Common myeloid progenitor, CD34-positive (primary cell): ENCODE measurements at regions of chr9 and their contacts with region 1.

Region 1: GRCh38 chr9:126902210-126902609 is 12.4 kb upstream of the RALGPS1 start:
- DNase-seq: no peak
- H3K4me3 ChIP-seq: no peak overlapping the region
- H3K27ac ChIP-seq: no peak overlapping the region
- H3K4me1 ChIP-seq: no peaks in the 10 kb centered on the region
- H3K27me3 ChIP-seq: no peaks in the 10 kb centered on the region

Region 2: GRCh38 chr9:126650404-126651341 is 251.5 kb before region 1 on chr9:
- CTCF ChIA-PET with region 1: no interaction called
- POLR2A ChIA-PET with region 1: no interaction called
- DNase-seq: no peak
- H3K4me3 ChIP-seq: no peak overlapping the region
- H3K27ac ChIP-seq: no peak overlapping the region
- H3K4me1 ChIP-seq: no peaks in the 10 kb centered on the region
- H3K27me3 ChIP-seq: peaks cover 0 to 98% (median 30%) of the 10 kb centered on the region in 5 experiments

Region 3: DNA sequence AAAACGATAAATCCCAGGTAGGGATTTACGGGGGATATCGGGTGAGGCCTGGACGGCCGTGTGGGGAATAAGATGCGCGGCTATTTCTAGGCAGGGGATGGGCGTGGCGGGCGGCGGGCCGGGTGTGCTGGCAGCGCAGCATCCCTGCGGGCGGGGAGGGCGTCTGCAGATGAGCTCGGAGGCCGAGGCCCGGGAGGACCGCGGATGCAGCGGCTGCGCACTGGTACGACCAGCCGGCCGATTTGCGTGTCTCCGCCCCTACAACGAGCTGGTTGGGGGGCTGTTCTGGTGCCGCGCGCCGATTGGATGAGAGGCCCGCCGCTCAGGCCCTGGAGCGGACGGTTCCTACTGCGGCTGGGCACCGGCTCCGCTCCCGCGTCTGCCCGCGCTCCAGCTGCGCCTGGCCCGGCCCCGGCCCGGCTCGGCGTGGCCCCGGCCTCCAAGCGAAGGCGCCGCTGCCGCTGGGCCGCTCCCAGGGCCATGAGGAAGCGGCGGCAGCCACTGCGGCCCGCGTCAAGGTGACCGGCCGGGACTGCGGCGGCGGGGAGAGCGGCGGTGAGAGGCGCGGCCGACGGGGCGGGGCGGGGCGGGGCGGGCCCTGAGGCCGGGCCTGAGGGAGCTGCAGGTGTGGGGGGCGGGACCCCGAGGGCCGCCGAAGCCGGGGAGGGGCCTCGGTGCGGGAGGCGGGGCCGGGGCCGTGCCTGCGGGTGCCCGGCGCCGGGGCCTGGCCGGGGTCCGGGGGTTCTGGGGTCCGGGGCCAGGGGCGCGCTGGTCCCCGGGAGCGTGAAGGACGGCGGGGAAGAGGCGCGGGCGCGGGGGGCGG is 12.5 kb after region 1 on chr9 and contains the start of gene RALGPS1:
- CTCF ChIA-PET with region 1: interaction called, 10 read pairs
- POLR2A ChIA-PET with region 1: no interaction called
- DNase-seq: peak; percentile 95 to 96 (median 95)
- H3K4me3 ChIP-seq: peak within 1 kb of the TSS; percentile 40 to 77 (median 51)
- H3K27ac ChIP-seq: no peak within 1 kb of the TSS
- H3K4me1 ChIP-seq: peaks cover 0 to 9% (median 6%) of the 10 kb centered on the region in 4 experiments
- H3K27me3 ChIP-seq: peaks cover 0 to 16% (median 9%) of the 10 kb centered on the region in 5 experiments

Region 4: DNA sequence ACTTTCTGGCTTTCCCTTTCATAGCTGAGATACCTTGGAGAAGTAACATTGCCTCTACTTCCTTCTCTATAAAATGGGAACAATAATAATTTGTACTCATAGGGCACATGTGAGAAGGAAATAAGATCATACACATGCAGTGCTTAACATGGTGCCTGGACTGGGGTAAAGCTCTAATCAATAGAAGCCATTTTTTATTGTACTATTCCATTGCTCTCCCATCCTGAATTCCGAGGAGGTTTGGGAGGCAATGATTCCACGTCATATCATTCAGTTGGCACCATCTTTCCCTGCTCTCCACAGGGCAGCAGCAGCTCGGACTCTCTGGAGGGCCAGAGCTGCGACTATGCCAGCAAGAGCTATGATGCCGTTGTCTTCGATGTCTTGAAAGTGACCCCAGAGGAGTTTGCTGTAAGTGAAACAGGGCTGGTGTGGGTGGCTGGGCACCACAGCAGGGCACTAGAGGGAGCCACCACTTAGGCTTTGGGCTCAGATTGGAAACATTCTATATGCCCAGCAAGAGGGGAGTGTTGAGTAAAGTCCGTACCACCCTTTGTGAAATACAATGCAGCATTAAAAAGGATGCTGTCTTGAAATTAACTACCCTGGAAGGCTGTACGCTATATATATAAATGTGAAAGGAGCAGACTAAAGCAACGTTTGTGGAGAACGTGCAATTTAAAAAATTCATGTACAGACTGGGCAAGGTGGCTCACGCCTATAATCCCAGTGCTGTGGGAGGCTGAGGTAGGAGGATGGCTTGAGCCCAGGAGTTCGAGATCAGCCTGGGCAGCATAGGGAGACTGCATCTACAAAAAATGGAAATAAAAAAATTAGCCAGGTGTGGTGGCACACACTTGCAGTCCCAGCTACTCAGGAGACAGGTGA is 63.6 kb after region 1 on chr9:
- CTCF ChIA-PET with region 1: no interaction called
- POLR2A ChIA-PET with region 1: no interaction called
- DNase-seq: peak; percentile 49 to 67 (median 61)
- H3K4me3 ChIP-seq: no peak overlapping the region
- H3K27ac ChIP-seq: no peak overlapping the region
- H3K4me1 ChIP-seq: no peaks in the 10 kb centered on the region
- H3K27me3 ChIP-seq: peaks cover 0 to 8% (median 1%) of the 10 kb centered on the region in 5 experiments

Region 5: GRCh38 chr9:127128341-127129072 is 226.3 kb after region 1 on chr9:
- CTCF ChIA-PET with region 1: no interaction called
- POLR2A ChIA-PET with region 1: no interaction called
- DNase-seq: peak in 2 of 3 donors; percentile 6 to 12
- H3K4me3 ChIP-seq: no peak overlapping the region
- H3K27ac ChIP-seq: no peak overlapping the region
- H3K4me1 ChIP-seq: peaks cover 0 to under 1% (median under 1%) of the 10 kb centered on the region in 4 experiments
- H3K27me3 ChIP-seq: peaks cover 0 to 26% (median 18%) of the 10 kb centered on the region in 5 experiments